MCF 10A (cell line): ENCODE measurements at regions of chr6 and their contacts with region 1.

Region 1: GRCh38 chr6:28136585-28137504 is 4.8 kb upstream of the ZKSCAN8 start:
- DNase-seq: peak; percentile 95
- H3K4me3 Mint-ChIP-seq: peak overlapping the region; percentile 99
- H3K27ac Mint-ChIP-seq: peak overlapping the region; percentile 100
- H3K4me1 Mint-ChIP-seq: peaks cover 29% of the 10 kb centered on the region
- H3K27me3 Mint-ChIP-seq: no peaks in the 10 kb centered on the region
- CTCF ChIP-seq: no peak

Region 2: GRCh38 chr6:27700337-27700736 is 436.5 kb before region 1 on chr6:
- CTCF ChIA-PET with region 1: no interaction called
- POLR2A ChIA-PET with region 1: no interaction called
- intact Hi-C with region 1: no loop called
- DNase-seq: no peak
- H3K4me3 Mint-ChIP-seq: no peak overlapping the region
- H3K27ac Mint-ChIP-seq: no peak overlapping the region
- H3K4me1 Mint-ChIP-seq: peaks cover 6% of the 10 kb centered on the region
- H3K27me3 Mint-ChIP-seq: no peaks in the 10 kb centered on the region
- CTCF ChIP-seq: no peak

Region 3: GRCh38 chr6:28104392-28105244 is 32.2 kb before region 1 on chr6:
- CTCF ChIA-PET with region 1: interaction called, 5 read pairs
- POLR2A ChIA-PET with region 1: interaction called, 23 read pairs
- intact Hi-C with region 1: loop called (anchors 2 kb)
- DNase-seq: peak; percentile 78
- H3K4me3 Mint-ChIP-seq: peak overlapping the region; percentile 83
- H3K27ac Mint-ChIP-seq: peak overlapping the region; percentile 63
- H3K4me1 Mint-ChIP-seq: no peaks in the 10 kb centered on the region
- H3K27me3 Mint-ChIP-seq: no peaks in the 10 kb centered on the region
- CTCF ChIP-seq: peak; percentile 59

Region 4: GRCh38 chr6:28161410-28162079 is 24.7 kb after region 1 on chr6:
- CTCF ChIA-PET with region 1: interaction called, 5 read pairs
- POLR2A ChIA-PET with region 1: interaction called, 31 read pairs
- intact Hi-C with region 1: no loop called
- DNase-seq: peak; percentile 83
- H3K4me3 Mint-ChIP-seq: peak overlapping the region; percentile 85
- H3K27ac Mint-ChIP-seq: peak overlapping the region; percentile 85
- H3K4me1 Mint-ChIP-seq: peaks cover 12% of the 10 kb centered on the region
- H3K27me3 Mint-ChIP-seq: no peaks in the 10 kb centered on the region
- CTCF ChIP-seq: no peak

Region 5: GRCh38 chr6:28225056-28225834 is 88.4 kb after region 1 on chr6 and contains the start of gene ZSCAN9:
- CTCF ChIA-PET with region 1: interaction called, 8 read pairs
- POLR2A ChIA-PET with region 1: interaction called, 36 read pairs
- intact Hi-C with region 1: loop called (anchors 1 kb)
- DNase-seq: peak; percentile 93
- H3K4me3 Mint-ChIP-seq: peak within 1 kb of the TSS; percentile 94
- H3K27ac Mint-ChIP-seq: peak within 1 kb of the TSS; percentile 97
- H3K4me1 Mint-ChIP-seq: peaks cover 16% of the 10 kb centered on the region
- H3K27me3 Mint-ChIP-seq: no peaks in the 10 kb centered on the region
- CTCF ChIP-seq: no peak
- total RNA-seq, gene ZSCAN9: 13.7 and 15.6 TPM in 2 replicates

Region 6: DNA sequence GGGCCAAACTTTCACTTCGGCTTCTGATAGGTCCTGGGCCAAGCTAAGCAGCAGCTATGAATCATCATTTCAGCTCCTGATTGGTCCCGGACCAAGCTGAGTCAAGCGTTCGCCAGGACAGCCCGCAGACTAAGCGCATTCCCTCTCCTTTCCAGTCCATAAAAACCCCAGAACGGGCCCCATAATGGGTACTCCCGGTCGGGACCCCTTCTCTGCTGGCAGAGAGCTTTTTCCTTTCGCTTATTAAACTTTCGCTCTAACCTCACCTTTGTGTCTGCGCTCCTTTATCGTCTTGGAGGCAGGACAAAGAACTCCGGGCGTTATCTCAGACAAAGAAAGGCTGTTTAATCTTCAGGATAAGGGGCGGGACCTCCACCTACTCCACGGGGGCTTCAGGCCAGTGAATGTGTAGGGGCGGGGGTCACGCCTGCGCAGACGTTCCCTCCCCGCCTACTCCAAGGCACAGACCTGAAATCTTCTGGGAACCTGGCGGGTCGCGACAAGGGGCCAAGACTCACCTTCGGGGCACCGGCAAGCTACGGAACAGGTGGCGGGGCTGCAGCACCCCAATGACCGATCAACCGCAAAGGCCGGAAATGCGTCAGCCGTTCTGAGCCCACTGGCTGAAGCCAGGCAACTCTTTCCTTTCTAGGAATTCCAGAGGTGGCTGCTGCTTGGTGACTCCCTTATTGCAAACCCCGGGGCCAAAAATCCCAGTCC is 198.9 kb after region 1 on chr6 and contains the start of gene ZSCAN31:
- CTCF ChIA-PET with region 1: no interaction called
- POLR2A ChIA-PET with region 1: interaction called, 17 read pairs
- intact Hi-C with region 1: loop called (anchors 5 kb)
- DNase-seq: peak; percentile 98
- H3K4me3 Mint-ChIP-seq: no peak within 1 kb of the TSS
- H3K27ac Mint-ChIP-seq: no peak within 1 kb of the TSS
- H3K4me1 Mint-ChIP-seq: no peaks in the 10 kb centered on the region
- H3K27me3 Mint-ChIP-seq: no peaks in the 10 kb centered on the region
- CTCF ChIP-seq: no peak
- total RNA-seq, gene ZSCAN31: 5.0 and 6.7 TPM in 2 replicates

Region 7: GRCh38 chr6:28383235-28384142 is 246.6 kb after region 1 on chr6:
- CTCF ChIA-PET with region 1: interaction called, 3 read pairs
- POLR2A ChIA-PET with region 1: interaction called, 14 read pairs
- intact Hi-C with region 1: loop called (anchors 1 kb)
- DNase-seq: peak; percentile 80
- H3K4me3 Mint-ChIP-seq: peak overlapping the region; percentile 82
- H3K27ac Mint-ChIP-seq: peak overlapping the region; percentile 96
- H3K4me1 Mint-ChIP-seq: peaks cover 14% of the 10 kb centered on the region
- H3K27me3 Mint-ChIP-seq: no peaks in the 10 kb centered on the region
- CTCF ChIP-seq: peak; percentile 48